ENCODE measurements at regions of chr19 and their contacts with region 1.

Region 1: DNA sequence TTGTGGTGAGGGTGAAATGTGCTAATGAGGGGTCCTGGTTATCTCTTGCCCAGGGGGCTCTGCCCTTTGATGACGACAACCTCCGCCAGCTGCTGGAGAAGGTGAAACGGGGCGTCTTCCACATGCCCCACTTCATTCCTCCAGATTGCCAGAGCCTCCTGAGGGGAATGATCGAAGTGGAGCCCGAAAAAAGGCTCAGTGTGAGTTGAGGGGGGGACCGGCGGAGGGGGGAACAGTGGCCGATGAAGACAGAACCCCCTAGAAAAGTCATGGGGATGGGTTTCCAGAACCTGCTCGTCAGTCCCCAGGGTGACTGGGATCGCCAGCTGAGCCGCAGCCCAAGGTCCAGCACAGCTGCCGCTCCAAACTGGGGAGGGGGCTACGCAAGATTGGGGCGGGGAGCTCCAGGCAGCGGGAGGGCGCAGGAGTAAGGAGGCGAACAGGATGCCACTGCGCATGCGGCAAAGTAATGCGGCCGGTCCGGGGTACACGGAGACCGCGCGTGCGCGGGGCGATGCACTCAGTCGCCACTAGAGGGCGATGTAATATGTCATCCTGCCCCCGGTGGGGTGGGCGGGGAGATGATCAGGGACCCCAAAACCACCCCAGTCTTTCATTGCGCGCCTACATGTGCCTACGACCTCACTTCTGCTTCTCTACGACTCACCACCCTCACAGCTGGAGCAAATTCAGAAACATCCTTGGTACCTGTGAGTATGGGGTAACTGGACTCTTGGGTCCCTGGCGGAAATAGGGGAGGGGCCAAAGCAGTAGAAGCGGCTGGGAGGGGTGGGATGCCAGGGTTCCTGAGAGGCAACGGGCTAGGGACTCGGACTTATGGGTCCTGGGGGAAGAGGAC is 17.9 kb downstream of the BRSK1 start:
- DNase-seq: peak; percentile 91
- ATAC-seq: peak; percentile 87
- H3K4me3 ChIP-seq: peak overlapping the region; percentile 57
- H3K27ac ChIP-seq: no peak overlapping the region
- H3K4me1 ChIP-seq: peaks cover 7% of the 10 kb centered on the region; the same call in 1 of the 2 replicates
- H3K27me3 ChIP-seq: no peaks in the 10 kb centered on the region
- CTCF ChIP-seq: peak; percentile 97

Region 2: GRCh38 chr19:55325172-55325571 is 23.5 kb after region 1 on chr19 and contains the start of gene TMEM150B:
- CTCF ChIA-PET with region 1: no interaction called
- POLR2A ChIA-PET with region 1: no interaction called
- intact Hi-C with region 1: loop called (anchors 2 kb)
- DNase-seq: no peak
- ATAC-seq: no peak
- H3K4me3 ChIP-seq: no peak within 1 kb of the TSS
- H3K27ac ChIP-seq: no peak within 1 kb of the TSS
- H3K4me1 ChIP-seq: peaks cover 9% of the 10 kb centered on the region
- H3K27me3 ChIP-seq: no peaks in the 10 kb centered on the region
- CTCF ChIP-seq: no peak
- total RNA-seq, gene TMEM150B: not detected in 2 replicates

Region 3: DNA sequence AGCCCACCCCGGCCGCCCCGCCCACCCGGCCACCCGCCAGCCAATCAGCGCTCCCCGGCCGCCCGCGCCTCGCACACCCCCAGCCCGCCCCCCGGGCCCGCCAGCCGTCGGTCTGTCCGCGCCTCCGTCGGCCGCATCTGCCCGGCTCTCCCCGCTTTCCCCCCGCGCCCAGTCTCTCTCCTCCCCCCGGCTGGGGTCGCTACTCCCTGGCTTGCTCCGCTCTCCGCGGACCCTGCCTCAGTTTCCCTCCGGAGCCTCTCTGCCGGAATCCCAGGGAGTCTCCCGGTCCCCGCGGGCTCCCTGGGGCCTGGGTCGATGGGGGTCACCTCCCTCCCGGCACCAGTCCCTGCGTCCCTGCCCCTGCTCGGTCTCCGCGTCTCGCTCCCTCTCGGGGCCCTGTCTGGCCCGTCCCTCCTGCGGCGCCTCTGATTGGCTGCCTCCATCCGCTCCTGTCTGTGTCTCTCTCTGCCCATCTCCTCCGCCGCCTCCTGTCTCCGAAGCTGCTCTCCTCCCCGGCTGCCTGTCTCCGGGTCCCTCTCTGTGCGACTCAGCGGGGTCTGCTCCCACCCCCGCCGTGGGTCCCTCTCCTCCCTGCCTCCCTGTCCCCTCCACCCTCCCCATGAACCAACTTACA is 68.1 kb after region 1 on chr19:
- CTCF ChIA-PET with region 1: no interaction called
- POLR2A ChIA-PET with region 1: no interaction called
- intact Hi-C with region 1: loop called (anchors 5 kb)
- DNase-seq: peak; percentile 72
- ATAC-seq: peak; percentile 68
- H3K4me3 ChIP-seq: peak overlapping the region; percentile 77
- H3K27ac ChIP-seq: peak overlapping the region; percentile 14; the same call in 1 of the 2 replicates
- H3K4me1 ChIP-seq: peaks cover 44% of the 10 kb centered on the region
- H3K27me3 ChIP-seq: no peaks in the 10 kb centered on the region
- CTCF ChIP-seq: no peak

Measured in PC-3 (cell line).